ENCODE measurements at regions of chr7 and their contacts with region 1.

Region 1: GRCh38 chr7:80659120-80660055 is 20.9 kb downstream of the CD36 start:
- DNase-seq: no peak
- ATAC-seq: peak; percentile 66
- H3K4me3 ChIP-seq: no peak overlapping the region
- H3K27ac ChIP-seq: no peak overlapping the region
- H3K4me1 ChIP-seq: no peaks in the 10 kb centered on the region
- H3K27me3 ChIP-seq: no peaks in the 10 kb centered on the region
- CTCF ChIP-seq: peak in 2 of 3 experiments; percentile 36 to 41; a peak in 3 of 6 replicates
- EP300 ChIP-seq: no peak
- POLR2A ChIP-seq: no peak
- RAD21 ChIP-seq: peak; percentile 65

Region 2: DNA sequence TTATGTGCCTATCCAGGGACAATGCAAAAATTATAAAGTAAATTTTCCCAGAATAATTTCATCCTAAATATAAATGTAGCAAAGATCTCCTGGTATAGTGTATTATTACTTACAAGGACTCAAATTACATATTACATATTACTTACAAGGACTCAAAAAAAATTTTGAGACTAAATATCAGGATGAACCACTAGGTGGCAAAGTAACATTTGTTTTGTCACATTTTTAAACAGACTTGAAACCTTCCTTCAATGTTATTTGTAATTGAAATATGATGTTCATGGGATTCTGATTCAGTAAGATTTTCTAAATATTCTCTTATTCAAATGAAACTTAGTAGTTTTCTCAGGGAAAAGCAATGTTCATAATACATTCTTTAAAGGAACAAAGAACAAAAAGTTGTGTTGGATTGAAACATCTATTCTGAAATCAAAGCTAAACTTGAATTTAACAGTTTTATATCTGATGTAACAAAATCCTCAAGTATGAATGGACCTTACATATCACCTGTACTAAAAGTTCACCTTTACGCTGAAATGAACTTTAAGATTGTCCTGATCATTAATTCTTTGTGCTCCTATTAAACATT is 599.1 kb before region 1 on chr7:
- CTCF ChIA-PET with region 1: interaction called, 4 read pairs
- POLR2A ChIA-PET with region 1: no interaction called
- RAD21 ChIA-PET with region 1: no interaction called
- SMC1A ChIA-PET with region 1: interaction called, 3 read pairs
- in situ Hi-C with region 1: loop called (anchors 25 kb)
- intact Hi-C with region 1: loop called (anchors 10 kb)
- DNase-seq: no peak
- ATAC-seq: 0 out of 3 replicates have a peak, but pooled peaks have one; percentile 28
- H3K4me3 ChIP-seq: no peak overlapping the region
- H3K27ac ChIP-seq: no peak overlapping the region
- H3K4me1 ChIP-seq: no peaks in the 10 kb centered on the region
- H3K27me3 ChIP-seq: no peaks in the 10 kb centered on the region
- CTCF ChIP-seq: peak; percentile 11 to 43 (median 25); a peak in 2 of 6 replicates
- EP300 ChIP-seq: no peak
- POLR2A ChIP-seq: no peak
- RAD21 ChIP-seq: peak; percentile 38; the same call in 1 of the 2 replicates

Region 3: GRCh38 chr7:80428161-80429054 is 231.0 kb before region 1 on chr7:
- CTCF ChIA-PET with region 1: interaction called, 8 read pairs
- POLR2A ChIA-PET with region 1: no interaction called
- RAD21 ChIA-PET with region 1: interaction called, 6 read pairs
- SMC1A ChIA-PET with region 1: interaction called, 3 read pairs
- in situ Hi-C with region 1: loop called (anchors 10 kb)
- intact Hi-C with region 1: loop called (anchors 1 kb)
- DNase-seq: no peak
- ATAC-seq: peak; percentile 73
- H3K4me3 ChIP-seq: no peak overlapping the region
- H3K27ac ChIP-seq: no peak overlapping the region
- H3K4me1 ChIP-seq: no peaks in the 10 kb centered on the region
- H3K27me3 ChIP-seq: no peaks in the 10 kb centered on the region; a peak in 1 of 4 replicates
- CTCF ChIP-seq: peak; percentile 25 to 53 (median 40); a peak in 4 of 6 replicates
- EP300 ChIP-seq: no peak
- POLR2A ChIP-seq: no peak
- RAD21 ChIP-seq: peak; percentile 95

Region 4: GRCh38 chr7:80472491-80473200 is 186.7 kb before region 1 on chr7:
- CTCF ChIA-PET with region 1: interaction called, 4 read pairs
- POLR2A ChIA-PET with region 1: no interaction called
- RAD21 ChIA-PET with region 1: no interaction called
- SMC1A ChIA-PET with region 1: no interaction called
- in situ Hi-C with region 1: no loop called
- intact Hi-C with region 1: loop called (anchors 5 kb)
- DNase-seq: no peak
- ATAC-seq: no peak
- H3K4me3 ChIP-seq: no peak overlapping the region
- H3K27ac ChIP-seq: no peak overlapping the region
- H3K4me1 ChIP-seq: no peaks in the 10 kb centered on the region
- H3K27me3 ChIP-seq: no peaks in the 10 kb centered on the region
- CTCF ChIP-seq: no peak
- EP300 ChIP-seq: no peak
- POLR2A ChIP-seq: no peak
- RAD21 ChIP-seq: no peak